PC-9 (cell line): ENCODE measurements at regions of chr9 and their contacts with region 1.

Region 1: DNA sequence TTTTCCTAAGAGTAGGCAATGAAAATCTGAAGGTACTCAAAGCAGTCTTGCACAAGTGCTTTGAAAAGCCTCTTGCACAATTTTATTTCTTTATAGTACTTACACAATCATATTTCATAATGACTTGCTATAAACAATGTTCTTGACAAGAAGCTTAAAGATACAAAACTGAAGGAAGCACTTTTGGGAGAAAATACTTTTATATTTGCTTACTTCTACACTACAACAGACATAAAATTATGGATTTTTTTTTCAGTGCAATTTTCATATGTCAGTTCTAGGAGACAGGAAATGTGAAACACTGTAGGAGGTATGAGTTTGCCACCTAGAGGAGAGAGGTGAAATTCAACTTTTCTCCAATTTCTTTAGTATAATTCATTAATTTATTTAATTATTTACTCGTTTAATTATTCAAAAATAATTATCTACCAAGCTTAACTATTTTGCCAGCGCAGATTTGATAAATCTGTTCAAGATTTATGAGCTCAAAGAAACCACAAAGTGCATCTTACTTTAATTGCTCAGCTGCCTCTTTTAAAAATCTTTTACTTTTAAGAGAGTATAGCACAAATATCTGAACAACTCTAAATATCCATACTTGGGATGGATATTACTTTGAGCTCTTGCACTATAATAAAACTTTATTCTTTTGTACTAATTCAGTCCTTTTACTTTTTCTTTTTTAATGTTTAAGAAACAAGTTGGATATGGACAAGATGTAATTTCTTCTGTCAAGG is 29.0 kb upstream of the CDKN2B start:
- DNase-seq: peak in 1 of 2 experiments; percentile 39
- H3K4me3 ChIP-seq: no peak overlapping the region
- H3K27ac ChIP-seq: 0 out of 2 replicates have a peak overlapping the region, but pooled peaks have one; percentile 24
- H3K4me1 ChIP-seq: peaks cover 57% of the 10 kb centered on the region
- H3K27me3 ChIP-seq: no peaks in the 10 kb centered on the region
- CTCF ChIP-seq: peak; percentile 51; the same call in 1 of the 2 replicates

Region 2: DNA sequence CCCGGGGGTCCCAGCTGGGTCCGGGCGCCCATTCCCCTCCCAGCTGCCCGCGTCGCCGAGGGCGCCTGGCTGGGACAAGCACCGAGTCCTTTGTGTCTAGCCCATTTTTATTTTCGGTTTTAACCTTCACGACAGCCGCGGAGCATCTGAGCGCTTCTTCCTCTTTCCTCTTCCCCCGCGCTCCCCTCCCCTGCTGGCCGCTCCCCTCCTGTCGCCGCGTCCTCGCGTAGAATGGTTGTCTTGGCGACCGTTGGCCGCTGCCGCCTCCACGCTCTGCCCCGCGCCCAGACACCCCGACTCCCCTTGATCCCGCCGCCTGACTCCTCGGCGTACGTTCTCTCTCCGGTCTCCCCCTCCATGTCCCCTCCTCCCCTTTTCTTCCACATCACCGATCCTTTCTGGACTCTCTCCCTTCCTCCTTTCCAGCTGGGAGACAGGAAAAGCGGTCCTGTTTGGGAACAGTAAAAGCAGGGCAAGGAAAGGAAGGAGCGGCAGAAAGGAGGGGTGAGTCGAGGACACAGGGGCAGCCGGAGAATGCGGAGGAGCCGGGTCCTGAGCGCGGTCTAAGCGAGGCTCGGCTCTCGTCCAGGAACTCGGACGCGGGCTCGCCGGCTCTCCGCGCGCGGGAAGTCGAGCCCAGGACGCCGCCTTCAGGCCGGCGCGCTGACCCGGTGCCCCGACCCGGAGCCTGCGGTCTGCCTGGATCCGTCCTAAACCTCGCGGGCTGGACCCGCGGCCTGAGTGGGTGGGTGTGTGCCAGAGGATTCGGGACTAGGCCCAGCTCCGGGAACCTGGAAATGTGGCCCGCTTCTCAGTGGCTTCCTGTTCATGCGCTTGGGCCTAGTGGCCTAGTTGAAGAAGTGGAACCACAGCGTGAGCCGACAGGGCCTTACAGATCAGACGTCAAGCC is 42.7 kb before region 1 on chr9:
- CTCF ChIA-PET with region 1: no interaction called
- POLR2A ChIA-PET with region 1: interaction called, 3 read pairs
- intact Hi-C with region 1: loop called (anchors 5 kb)
- DNase-seq: peak; percentile 50 to 76
- H3K4me3 ChIP-seq: peak overlapping the region; percentile 98
- H3K27ac ChIP-seq: peak overlapping the region; percentile 69
- H3K4me1 ChIP-seq: peaks cover 26% of the 10 kb centered on the region; the same call in 1 of the 2 replicates
- H3K27me3 ChIP-seq: no peaks in the 10 kb centered on the region
- CTCF ChIP-seq: 0 out of 2 replicates have a peak, but pooled peaks have one; percentile 25

Region 3: GRCh38 chr9:22084336-22085035 is 46.4 kb after region 1 on chr9:
- CTCF ChIA-PET with region 1: no interaction called
- POLR2A ChIA-PET with region 1: interaction called, 3 read pairs
- intact Hi-C with region 1: loop called (anchors 2 kb)
- DNase-seq: peak; percentile 42 to 96
- H3K4me3 ChIP-seq: peak overlapping the region; percentile 43; the same call in 1 of the 2 replicates
- H3K27ac ChIP-seq: peak overlapping the region; percentile 100
- H3K4me1 ChIP-seq: peaks cover 54% of the 10 kb centered on the region
- H3K27me3 ChIP-seq: no peaks in the 10 kb centered on the region
- CTCF ChIP-seq: no peak

Region 4: GRCh38 chr9:22119537-22120158 is 81.5 kb after region 1 on chr9:
- CTCF ChIA-PET with region 1: no interaction called
- POLR2A ChIA-PET with region 1: interaction called, 3 read pairs
- intact Hi-C with region 1: loop called (anchors 5 kb)
- DNase-seq: no peak
- H3K4me3 ChIP-seq: no peak overlapping the region
- H3K27ac ChIP-seq: no peak overlapping the region
- H3K4me1 ChIP-seq: peaks cover 15% of the 10 kb centered on the region; the same call in 1 of the 2 replicates
- H3K27me3 ChIP-seq: no peaks in the 10 kb centered on the region
- CTCF ChIP-seq: peak; percentile 25; the same call in 1 of the 2 replicates

Region 5: GRCh38 chr9:22211593-22212360 is 173.7 kb after region 1 on chr9:
- CTCF ChIA-PET with region 1: no interaction called
- POLR2A ChIA-PET with region 1: no interaction called
- intact Hi-C with region 1: loop called (anchors 5 kb)
- DNase-seq: peak; percentile 33 to 93
- H3K4me3 ChIP-seq: no peak overlapping the region
- H3K27ac ChIP-seq: peak overlapping the region; percentile 95
- H3K4me1 ChIP-seq: peaks cover 63% of the 10 kb centered on the region
- H3K27me3 ChIP-seq: no peaks in the 10 kb centered on the region
- CTCF ChIP-seq: no peak